HepG2 (cell line): ENCODE measurements at regions of chr15 and their contacts with region 1.

Region 1: DNA sequence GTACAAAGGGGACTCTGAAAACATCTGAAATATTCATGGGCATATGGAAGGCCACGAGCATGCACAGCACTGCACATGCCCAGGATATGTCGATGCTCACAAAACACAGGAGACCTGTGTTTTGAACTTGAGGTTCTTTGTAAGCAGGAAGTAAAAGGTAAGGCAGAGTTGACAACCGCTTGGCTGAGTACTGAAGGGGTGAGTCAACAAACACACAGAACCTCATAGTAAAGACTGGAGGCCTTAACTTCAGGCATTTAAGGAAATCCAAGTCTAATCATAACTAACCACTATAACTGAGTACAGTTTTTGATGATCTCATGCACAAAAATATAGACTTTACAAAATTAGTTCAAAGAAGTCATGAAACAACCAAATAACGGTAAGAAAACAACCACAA is 80.6 kb downstream of the MYO9A start:
- DNase-seq: peak; percentile 1
- ATAC-seq: no peak
- H3K4me3 ChIP-seq: no peak overlapping the region
- H3K27ac ChIP-seq: no peak overlapping the region
- H3K4me1 ChIP-seq: no peaks in the 10 kb centered on the region
- H3K27me3 ChIP-seq: no peaks in the 10 kb centered on the region
- CTCF ChIP-seq: no peak
- EP300 ChIP-seq: no peak
- POLR2A ChIP-seq: no peak
- RAD21 ChIP-seq: no peak

Region 2: DNA sequence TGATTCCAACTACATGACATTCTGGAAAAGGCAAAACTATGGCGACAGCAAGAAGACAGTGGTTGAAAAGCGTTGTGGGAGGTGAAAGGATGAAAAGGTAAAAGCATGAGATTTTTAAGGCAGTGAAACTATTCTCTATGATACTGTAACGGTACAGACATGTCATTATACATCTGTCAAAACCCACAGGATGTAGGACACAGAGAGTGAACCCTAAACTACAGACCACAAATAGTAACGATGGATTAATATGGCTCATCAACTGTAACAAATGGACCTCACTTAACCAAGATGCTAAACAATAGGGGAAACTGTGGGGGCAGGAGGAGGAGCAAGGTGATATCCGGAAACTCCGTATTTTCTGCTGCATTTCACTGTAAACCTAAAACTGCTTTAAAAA is 41.6 kb after region 1 on chr15:
- CTCF ChIA-PET with region 1: no interaction called
- POLR2A ChIA-PET with region 1: no interaction called
- in situ Hi-C with region 1: no loop called
- intact Hi-C with region 1: no loop called
- DNase-seq: no peak
- ATAC-seq: no peak
- H3K4me3 ChIP-seq: no peak overlapping the region
- H3K27ac ChIP-seq: no peak overlapping the region
- H3K4me1 ChIP-seq: no peaks in the 10 kb centered on the region
- H3K27me3 ChIP-seq: no peaks in the 10 kb centered on the region
- CTCF ChIP-seq: no peak
- EP300 ChIP-seq: no peak
- POLR2A ChIP-seq: no peak
- RAD21 ChIP-seq: no peak

Region 3: DNA sequence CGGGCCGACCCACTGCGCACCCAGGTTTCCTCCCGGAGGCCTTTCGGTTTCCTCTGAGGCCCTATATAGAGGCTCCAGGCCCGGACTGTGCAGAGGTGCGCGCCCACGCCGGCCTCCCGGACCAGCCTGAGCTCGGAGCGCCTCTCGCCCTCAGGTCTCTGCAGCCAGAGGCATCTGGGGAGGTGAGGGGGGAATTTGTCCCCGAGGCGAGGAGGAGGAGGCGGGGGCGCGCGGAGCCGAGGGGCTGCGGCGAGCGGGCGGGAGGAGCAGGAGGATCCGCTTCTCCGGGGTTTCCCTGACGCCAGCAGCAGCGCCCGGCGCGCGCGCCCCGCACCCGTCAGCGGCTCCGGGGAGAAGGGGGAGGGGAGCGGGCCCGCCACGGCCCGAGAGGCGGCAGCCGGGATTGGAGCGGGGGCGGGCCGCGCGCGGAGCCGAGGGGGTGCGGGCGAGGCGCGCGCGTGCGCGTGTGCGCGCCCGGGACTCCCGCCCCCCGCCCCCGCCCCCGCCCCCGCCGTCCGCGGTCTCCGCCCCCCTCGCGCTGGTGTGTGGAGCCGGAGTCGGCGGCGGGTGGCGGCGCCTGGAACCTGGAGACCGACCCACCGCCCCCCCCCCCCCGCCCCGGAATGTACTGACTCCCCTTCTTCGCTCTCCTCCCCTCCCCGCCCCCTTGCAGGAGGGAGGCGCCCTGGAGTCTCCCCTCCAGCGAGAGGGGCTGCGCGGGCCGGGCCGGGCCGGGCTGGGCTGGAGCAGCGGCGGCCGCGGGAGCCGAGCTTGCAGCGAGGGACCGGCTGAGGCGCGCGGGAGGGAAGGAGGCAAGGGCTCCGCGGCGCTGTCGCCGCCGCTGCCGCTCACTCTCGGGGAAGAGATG is 1014.7 kb after region 1 on chr15 and contains the start of gene NEO1:
- CTCF ChIA-PET with region 1: no interaction called
- POLR2A ChIA-PET with region 1: no interaction called
- in situ Hi-C with region 1: no loop called
- intact Hi-C with region 1: loop called (anchors 5 kb)
- DNase-seq: peak; percentile 59
- ATAC-seq: peak; percentile 87
- H3K4me3 ChIP-seq: peak within 1 kb of the TSS; percentile 82 to 92 (median 88)
- H3K27ac ChIP-seq: peak within 1 kb of the TSS; percentile 80
- H3K4me1 ChIP-seq: peaks cover 14% of the 10 kb centered on the region
- H3K27me3 ChIP-seq: peaks cover 0 to 11% of the 10 kb centered on the region in 2 experiments; a peak in 2 of 5 replicates
- CTCF ChIP-seq: no peak
- EP300 ChIP-seq: no peak
- POLR2A ChIP-seq: peak; percentile 28 to 37; a peak in 2 of 4 replicates
- RAD21 ChIP-seq: no peak
- total RNA-seq, gene NEO1: 10.0 and 11.0 TPM in 2 replicates

Region 4: GRCh38 chr15:73908030-73908821 is 1870.9 kb after region 1 on chr15:
- CTCF ChIA-PET with region 1: no interaction called
- POLR2A ChIA-PET with region 1: no interaction called
- in situ Hi-C with region 1: no loop called
- intact Hi-C with region 1: no loop called
- DNase-seq: peak; percentile 42
- ATAC-seq: peak; percentile 99
- H3K4me3 ChIP-seq: no peak overlapping the region
- H3K27ac ChIP-seq: no peak overlapping the region
- H3K4me1 ChIP-seq: peaks cover 6% of the 10 kb centered on the region; the same call in 1 of the 2 replicates
- H3K27me3 ChIP-seq: peaks cover 0 to 3% of the 10 kb centered on the region in 2 experiments; a peak in 3 of 5 replicates
- CTCF ChIP-seq: peak; percentile 97
- EP300 ChIP-seq: no peak
- POLR2A ChIP-seq: no peak
- RAD21 ChIP-seq: peak; percentile 79